ENCODE measurements at regions of chr20 and their contacts with region 1.

Region 1: DNA sequence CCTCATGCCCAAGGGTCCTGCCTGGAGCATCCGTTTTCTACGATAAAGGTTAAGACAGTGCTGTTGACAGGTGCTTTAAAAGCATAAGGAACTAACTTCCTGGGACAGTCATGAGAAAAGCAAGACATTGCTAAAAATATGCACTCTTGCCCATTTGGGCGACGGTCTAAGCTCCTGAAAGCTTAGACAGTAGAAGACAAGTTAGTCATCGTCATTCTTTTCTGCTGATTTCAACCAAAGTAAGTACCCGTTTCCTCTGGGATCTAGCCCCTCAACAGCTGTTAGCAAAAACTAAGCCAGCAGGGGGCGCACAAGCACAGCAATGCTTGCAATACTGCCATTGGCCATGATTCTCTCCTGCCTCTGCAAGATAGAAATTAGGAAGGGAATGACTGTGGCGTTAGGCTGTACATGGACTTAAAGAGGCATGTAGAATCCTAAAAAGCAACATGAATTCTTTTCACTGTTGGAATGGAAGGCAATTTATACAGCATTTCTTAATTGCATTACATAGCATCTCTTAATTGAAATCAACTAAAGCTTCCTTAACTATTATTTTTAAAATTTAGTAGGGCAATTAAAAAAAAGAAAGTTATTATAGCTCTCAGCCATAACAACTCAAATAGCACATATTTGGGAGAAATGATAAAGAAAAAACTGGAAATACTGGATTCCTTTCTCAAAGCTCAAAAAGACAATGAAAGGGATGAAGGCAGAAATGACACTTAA is 147.8 kb upstream of the RALGAPA2 start:
- DNase-seq: peak; percentile 89
- ATAC-seq: peak; percentile 82
- H3K4me3 Mint-ChIP-seq: no peak overlapping the region
- H3K27ac Mint-ChIP-seq: no peak overlapping the region
- H3K4me1 Mint-ChIP-seq: no peaks in the 10 kb centered on the region
- H3K27me3 Mint-ChIP-seq: peaks cover 14% of the 10 kb centered on the region

Region 2: DNA sequence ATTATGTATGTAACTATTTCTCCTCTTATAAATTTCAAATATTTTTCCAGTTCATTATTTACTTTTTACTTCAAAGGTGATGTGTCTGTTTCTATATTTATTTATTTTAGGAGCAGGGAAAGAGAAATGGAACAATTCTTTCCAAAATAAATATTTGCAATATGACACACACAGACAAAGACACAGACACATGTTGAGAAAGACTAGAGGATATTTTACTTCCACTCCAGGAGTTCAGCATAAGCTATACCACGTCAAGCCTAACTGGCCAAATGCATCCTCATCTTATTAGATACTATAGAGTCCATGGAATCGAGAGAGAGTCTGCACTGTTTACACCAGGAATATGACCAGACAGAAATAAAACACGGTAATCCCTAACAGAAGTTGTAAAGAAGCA is 161.1 kb before region 1 on chr20:
- CTCF ChIA-PET with region 1: no interaction called
- POLR2A ChIA-PET with region 1: no interaction called
- DNase-seq: no peak
- ATAC-seq: no peak
- H3K4me3 Mint-ChIP-seq: no peak overlapping the region
- H3K27ac Mint-ChIP-seq: no peak overlapping the region
- H3K4me1 Mint-ChIP-seq: no peaks in the 10 kb centered on the region
- H3K27me3 Mint-ChIP-seq: no peaks in the 10 kb centered on the region

Region 3: DNA sequence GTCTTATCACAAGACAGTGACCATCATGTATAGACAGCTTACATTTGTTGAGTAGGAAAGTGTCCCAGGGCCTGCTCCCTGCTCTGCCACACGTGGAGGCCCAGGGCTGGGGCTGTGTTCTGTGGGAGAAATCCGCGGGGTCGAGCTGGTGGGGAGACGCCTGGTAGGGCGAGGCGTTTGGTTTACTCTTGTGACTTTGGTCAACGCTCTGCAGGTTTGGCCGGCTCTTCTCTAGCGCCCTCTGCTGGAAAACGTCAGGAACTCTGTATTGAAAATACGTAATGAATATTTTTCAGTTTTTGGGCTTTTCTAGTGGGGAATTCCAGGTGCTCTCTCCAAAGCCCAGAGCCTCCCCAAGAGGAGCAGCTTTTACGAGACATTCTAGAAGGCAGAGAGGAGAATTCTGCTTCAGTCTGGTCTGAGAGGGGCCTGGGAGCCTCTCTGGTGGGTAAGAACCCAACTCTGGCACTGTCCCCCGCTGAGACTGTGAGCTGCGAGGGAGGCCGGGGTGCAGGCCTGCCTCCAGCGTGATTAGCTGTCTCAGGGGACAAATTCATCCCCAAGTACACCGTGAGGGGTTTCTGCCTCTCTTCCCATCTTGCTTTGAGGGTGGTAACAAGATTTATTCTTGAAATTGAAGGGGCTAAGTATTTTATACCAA is 35.2 kb before region 1 on chr20:
- CTCF ChIA-PET with region 1: interaction called, 20 read pairs
- POLR2A ChIA-PET with region 1: no interaction called
- DNase-seq: peak; percentile 70
- ATAC-seq: peak; percentile 72
- H3K4me3 Mint-ChIP-seq: no peak overlapping the region
- H3K27ac Mint-ChIP-seq: no peak overlapping the region
- H3K4me1 Mint-ChIP-seq: no peaks in the 10 kb centered on the region
- H3K27me3 Mint-ChIP-seq: peaks cover 11% of the 10 kb centered on the region

Region 4: GRCh38 chr20:20837574-20838021 is 22.6 kb before region 1 on chr20:
- CTCF ChIA-PET with region 1: interaction called, 15 read pairs
- POLR2A ChIA-PET with region 1: no interaction called
- DNase-seq: peak; percentile 58
- ATAC-seq: no peak
- H3K4me3 Mint-ChIP-seq: no peak overlapping the region
- H3K27ac Mint-ChIP-seq: no peak overlapping the region
- H3K4me1 Mint-ChIP-seq: no peaks in the 10 kb centered on the region
- H3K27me3 Mint-ChIP-seq: no peaks in the 10 kb centered on the region

Region 5: GRCh38 chr20:20872428-20872827 is 12.2 kb after region 1 on chr20:
- CTCF ChIA-PET with region 1: interaction called, 11 read pairs
- POLR2A ChIA-PET with region 1: no interaction called
- DNase-seq: no peak
- ATAC-seq: no peak
- H3K4me3 Mint-ChIP-seq: no peak overlapping the region
- H3K27ac Mint-ChIP-seq: no peak overlapping the region
- H3K4me1 Mint-ChIP-seq: no peaks in the 10 kb centered on the region
- H3K27me3 Mint-ChIP-seq: peaks cover 9% of the 10 kb centered on the region